ENCODE measurements at regions of chr7 and their contacts with region 1.

Region 1: DNA sequence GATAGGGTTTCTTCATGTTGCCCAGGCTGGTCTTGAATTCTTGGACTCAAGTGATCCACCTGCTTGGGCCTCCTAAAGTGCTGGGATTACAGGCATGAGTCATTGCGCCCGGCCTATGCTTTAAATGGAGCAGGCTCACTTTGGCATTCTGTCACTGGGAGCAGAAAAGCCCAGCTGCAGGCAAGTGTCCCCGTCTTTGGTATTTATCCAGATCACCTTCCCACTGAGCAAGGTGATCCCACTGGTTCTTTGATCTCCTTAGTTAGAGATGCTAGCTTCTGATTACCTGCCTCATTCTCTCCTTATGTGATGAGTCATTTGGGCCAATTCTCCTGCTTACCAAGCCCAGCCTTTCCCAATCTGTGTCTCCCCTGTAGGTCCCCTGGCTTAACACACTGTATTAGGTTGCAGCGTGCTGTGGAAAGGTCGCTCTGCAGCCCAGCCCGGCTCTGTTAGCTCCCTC is 39.3 kb downstream of the SPDYE5 start:
- DNase-seq: no peak
- ATAC-seq: no peak
- H3K4me3 ChIP-seq: no peak overlapping the region
- H3K4me3 Mint-ChIP-seq: no peak overlapping the region
- H3K27ac ChIP-seq: no peak overlapping the region
- H3K27ac Mint-ChIP-seq: peak overlapping the region in 1 of 9 donors; percentile 47
- H3K4me1 ChIP-seq: peaks cover 2 to 8% of the 10 kb centered on the region in 2 donors
- H3K4me1 Mint-ChIP-seq: peaks cover 14 to 19% (median 15%) of the 10 kb centered on the region in 7 donors
- H3K27me3 ChIP-seq: no peaks in the 10 kb centered on the region
- H3K27me3 Mint-ChIP-seq: no peaks in the 10 kb centered on the region

Region 2: DNA sequence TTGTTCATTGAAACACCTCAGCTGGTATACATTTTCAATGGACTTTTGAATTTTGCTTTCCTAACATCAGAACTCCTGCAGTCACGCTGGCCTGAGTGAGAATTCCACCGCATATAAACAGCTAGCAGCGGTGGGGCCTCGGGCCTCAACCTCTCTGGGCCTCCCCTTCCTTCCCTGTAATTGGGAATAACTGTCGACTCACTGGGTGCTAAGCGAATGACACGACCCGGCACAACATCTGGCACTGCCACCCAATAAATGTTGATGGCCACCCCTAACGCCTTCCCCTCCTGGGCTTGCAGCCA is 458.5 kb before region 1 on chr7:
- CTCF ChIA-PET with region 1: no interaction called
- POLR2A ChIA-PET with region 1: no interaction called
- intact Hi-C with region 1: loop called in 1 of 2 experiments (anchors 5 kb)
- DNase-seq: peak in 2 of 9 donors; percentile 5 to 12
- ATAC-seq: no peak
- H3K4me3 ChIP-seq: peak overlapping the region; percentile 69
- H3K4me3 Mint-ChIP-seq: peak overlapping the region; percentile 89 to 95 (median 92)
- H3K27ac ChIP-seq: peak overlapping the region; percentile 86
- H3K27ac Mint-ChIP-seq: peak overlapping the region; percentile 92 to 98 (median 94)
- H3K4me1 ChIP-seq: peaks cover 4 to 7% of the 10 kb centered on the region in 2 donors
- H3K4me1 Mint-ChIP-seq: peaks cover 0 to 15% (median 9%) of the 10 kb centered on the region in 7 donors
- H3K27me3 ChIP-seq: no peaks in the 10 kb centered on the region
- H3K27me3 Mint-ChIP-seq: no peaks in the 10 kb centered on the region

Region 3: GRCh38 chr7:75762314-75762917 is 231.0 kb after region 1 on chr7:
- CTCF ChIA-PET with region 1: no interaction called
- POLR2A ChIA-PET with region 1: no interaction called
- intact Hi-C with region 1: loop called in 1 of 2 experiments (anchors 1 kb)
- DNase-seq: peak in 6 of 9 donors; percentile 24 to 54 (median 48)
- ATAC-seq: peak; percentile 91
- H3K4me3 ChIP-seq: no peak overlapping the region
- H3K4me3 Mint-ChIP-seq: no peak overlapping the region
- H3K27ac ChIP-seq: no peak overlapping the region
- H3K27ac Mint-ChIP-seq: no peak overlapping the region
- H3K4me1 ChIP-seq: no peaks in the 10 kb centered on the region
- H3K4me1 Mint-ChIP-seq: peaks cover 0 to 5% (median 3%) of the 10 kb centered on the region in 7 donors
- H3K27me3 ChIP-seq: no peaks in the 10 kb centered on the region
- H3K27me3 Mint-ChIP-seq: no peaks in the 10 kb centered on the region

Region 4: GRCh38 chr7:76047811-76048667 is 516.6 kb after region 1 on chr7 and contains the starts of genes MDH2 and STYXL1:
- CTCF ChIA-PET with region 1: no interaction called
- POLR2A ChIA-PET with region 1: no interaction called
- intact Hi-C with region 1: loop called in 1 of 2 experiments (anchors 5 kb)
- DNase-seq: peak; percentile 68 to 89 (median 76)
- ATAC-seq: peak; percentile 92
- H3K4me3 ChIP-seq: peak within 1 kb of the TSS; percentile 95
- H3K4me3 Mint-ChIP-seq: peak within 1 kb of the TSS; percentile 90 to 99 (median 97)
- H3K27ac ChIP-seq: peak within 1 kb of the TSS; percentile 80
- H3K27ac Mint-ChIP-seq: peak within 1 kb of the TSS; percentile 92 to 98 (median 97)
- H3K4me1 ChIP-seq: peaks cover 7 to 17% of the 10 kb centered on the region in 2 donors
- H3K4me1 Mint-ChIP-seq: peaks cover 36 to 70% (median 53%) of the 10 kb centered on the region in 7 donors
- H3K27me3 ChIP-seq: no peaks in the 10 kb centered on the region
- H3K27me3 Mint-ChIP-seq: no peaks in the 10 kb centered on the region
- total RNA-seq, gene MDH2: 71.7 to 172 (median 74.6) TPM
- total RNA-seq, gene STYXL1: 11.3 to 31.7 (median 20.0) TPM

Measured in naive thymus-derived CD4-positive, alpha-beta T cell (primary cell).